ENCODE measurements at regions of chr14 and their contacts with region 1.

Region 1: GRCh38 chr14:93655078-93655750 is 133.1 kb downstream of the PRIMA1 start:
- DNase-seq: no peak
- H3K4me3 ChIP-seq: no peak overlapping the region
- H3K27ac ChIP-seq: no peak overlapping the region
- H3K4me1 ChIP-seq: no peaks in the 10 kb centered on the region
- H3K27me3 ChIP-seq: no peaks in the 10 kb centered on the region
- CTCF ChIP-seq: peak; percentile 32 to 52 (median 47)

Region 2: GRCh38 chr14:93906341-93907329 is 251.4 kb after region 1 on chr14:
- dilution Hi-C with region 1: loop called (anchors 25 kb)
- DNase-seq: peak; percentile 13
- H3K4me3 ChIP-seq: no peak overlapping the region
- H3K27ac ChIP-seq: no peak overlapping the region
- H3K4me1 ChIP-seq: no peaks in the 10 kb centered on the region
- H3K27me3 ChIP-seq: no peaks in the 10 kb centered on the region
- CTCF ChIP-seq: peak; percentile 80 to 96 (median 93)

Measured in keratinocyte (primary cell).